Activated T-helper 2 cell treated with anti-CD3 and anti-CD28 coated beads, Interferon-gamma antibody, Interleukin-2, Interleukin-4, amounts not matched to agents 10 μg/mL and 5 μg/mL and 100 μg/mL, durations not matched to agents 14 hours and 24 hours and 36 hours (primary cell): ENCODE measurements at regions of chr1 and their contacts with region 1.

Region 1: GRCh38 chr1:89908672-89909436 is 86.1 kb upstream of the ZNF326 start:
- DNase-seq: no peak
- H3K4me3 Mint-ChIP-seq: no peak overlapping the region
- H3K27ac Mint-ChIP-seq: peak overlapping the region; percentile 34
- H3K4me1 Mint-ChIP-seq: peaks cover 49% of the 10 kb centered on the region
- H3K27me3 Mint-ChIP-seq: no peaks in the 10 kb centered on the region

Region 2: DNA sequence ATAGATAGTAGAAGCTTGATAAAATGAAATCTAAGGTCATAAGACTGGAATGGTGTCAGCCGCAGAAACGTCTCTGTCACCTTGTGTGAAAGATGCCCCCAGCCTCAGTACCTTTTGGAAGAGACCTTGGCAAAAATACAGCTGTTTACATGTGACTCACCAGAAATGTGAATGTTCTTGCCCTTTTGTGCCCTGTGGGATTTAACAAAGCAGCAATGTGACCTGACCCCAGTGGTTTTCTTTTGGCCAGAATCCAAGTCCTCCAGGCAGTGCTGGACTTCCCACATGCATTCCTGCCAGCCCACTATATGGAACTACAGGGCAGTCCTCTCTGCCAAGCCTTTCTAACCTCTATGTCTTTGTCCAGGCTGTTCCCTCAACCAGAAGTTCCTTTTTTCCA is 303.2 kb before region 1 on chr1:
- intact Hi-C with region 1: no loop called
- DNase-seq: no peak
- H3K4me3 Mint-ChIP-seq: peak overlapping the region; percentile 5
- H3K27ac Mint-ChIP-seq: peak overlapping the region; percentile 99
- H3K4me1 Mint-ChIP-seq: peaks cover 90% of the 10 kb centered on the region
- H3K27me3 Mint-ChIP-seq: no peaks in the 10 kb centered on the region

Region 3: DNA sequence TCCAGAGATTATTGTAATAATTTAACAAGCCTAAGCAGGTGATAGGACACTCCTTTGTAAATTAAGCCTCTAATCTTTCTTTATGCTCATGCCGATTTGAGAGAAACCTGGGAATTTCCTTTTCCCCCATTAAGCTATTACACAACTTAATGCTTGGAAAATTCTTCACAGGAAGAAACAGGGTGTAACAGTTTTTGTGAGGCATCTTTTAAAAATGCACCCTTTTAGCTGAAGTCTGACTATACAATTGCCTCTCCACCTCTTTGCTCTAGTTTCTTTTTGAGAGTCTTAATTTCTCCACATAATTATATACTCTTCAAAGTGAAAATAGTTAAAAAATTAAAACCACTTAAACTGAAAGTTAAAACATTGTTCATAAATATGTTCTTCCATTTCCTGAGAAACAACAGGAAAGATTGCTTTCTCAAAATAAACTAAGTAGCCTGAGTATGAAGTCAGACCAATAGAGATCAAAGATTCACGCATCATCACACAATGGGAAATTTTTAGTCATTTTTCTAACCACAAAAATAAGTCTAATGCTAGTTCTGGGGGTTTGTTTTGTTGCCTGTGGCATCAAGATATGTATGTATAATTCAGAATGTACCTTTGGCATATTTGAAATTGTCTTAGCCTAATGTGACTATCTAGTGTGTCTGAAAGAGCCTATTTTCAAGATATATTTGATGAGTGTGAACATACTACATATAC is 53.3 kb before region 1 on chr1:
- intact Hi-C with region 1: loop called (anchors 2 kb)
- DNase-seq: no peak
- H3K4me3 Mint-ChIP-seq: peak overlapping the region; percentile 68
- H3K27ac Mint-ChIP-seq: no peak overlapping the region
- H3K4me1 Mint-ChIP-seq: peaks cover 10% of the 10 kb centered on the region
- H3K27me3 Mint-ChIP-seq: no peaks in the 10 kb centered on the region

Region 4: DNA sequence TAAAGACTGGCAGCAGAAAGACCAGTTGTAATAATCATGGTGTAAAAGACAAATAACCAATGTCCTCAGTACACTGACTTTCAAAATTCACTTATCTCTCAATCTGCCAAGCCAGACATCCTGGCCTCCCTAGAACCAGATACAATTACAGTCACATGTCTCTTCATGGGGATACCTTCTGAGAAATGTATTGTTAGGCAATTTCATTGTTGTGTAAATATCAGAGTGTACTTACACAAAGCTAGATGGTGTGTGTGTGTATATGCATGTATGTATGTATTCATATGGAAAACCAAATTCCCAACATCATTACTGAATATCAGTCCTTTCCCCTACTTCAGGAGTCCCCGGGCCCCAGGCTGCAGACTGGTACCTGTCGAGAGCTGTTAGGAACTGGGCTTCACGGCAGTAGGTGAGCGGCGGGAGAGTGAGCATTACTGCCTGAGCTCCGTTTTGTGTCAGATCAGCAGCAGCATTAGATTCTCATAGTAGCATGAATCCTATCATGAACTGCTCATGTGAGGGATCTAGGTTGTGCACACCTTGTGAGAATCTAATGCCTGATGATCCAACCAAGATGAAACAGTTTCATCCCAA is 20.7 kb after region 1 on chr1:
- intact Hi-C with region 1: no loop called
- DNase-seq: no peak
- H3K4me3 Mint-ChIP-seq: no peak overlapping the region
- H3K27ac Mint-ChIP-seq: no peak overlapping the region
- H3K4me1 Mint-ChIP-seq: peaks cover 4% of the 10 kb centered on the region
- H3K27me3 Mint-ChIP-seq: no peaks in the 10 kb centered on the region

Region 5: DNA sequence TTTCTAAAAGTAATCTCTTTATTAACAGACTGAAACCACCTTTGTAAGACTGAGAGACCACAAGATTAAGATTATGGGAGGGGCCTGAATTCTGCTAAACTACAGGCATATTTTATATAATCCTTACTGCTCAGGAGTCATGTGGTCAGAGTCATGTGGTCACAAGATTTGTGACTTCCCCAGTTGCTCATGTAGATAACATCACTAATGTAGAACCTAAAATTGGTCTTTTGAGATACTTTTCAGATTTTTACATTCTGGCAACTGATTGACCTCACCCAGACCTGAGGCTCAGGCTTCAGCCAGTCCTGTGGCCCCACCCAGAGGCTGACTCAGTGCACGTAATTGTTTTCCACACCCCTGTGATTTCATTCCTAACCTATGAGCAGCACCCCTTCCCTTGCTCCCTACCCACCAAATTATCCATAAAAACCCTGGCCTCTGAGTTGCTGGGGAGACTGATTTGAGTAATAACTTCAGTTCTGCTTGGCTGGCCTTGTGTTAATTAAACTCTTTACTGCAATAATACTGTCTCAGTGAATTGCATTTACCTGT is 44.3 kb after region 1 on chr1:
- intact Hi-C with region 1: loop called (anchors 5 kb)
- DNase-seq: peak; percentile 16
- H3K4me3 Mint-ChIP-seq: no peak overlapping the region
- H3K27ac Mint-ChIP-seq: peak overlapping the region; percentile 26
- H3K4me1 Mint-ChIP-seq: peaks cover 29% of the 10 kb centered on the region
- H3K27me3 Mint-ChIP-seq: no peaks in the 10 kb centered on the region

Region 6: GRCh38 chr1:89965193-89965768 is 56.4 kb after region 1 on chr1:
- intact Hi-C with region 1: no loop called
- DNase-seq: no peak
- H3K4me3 Mint-ChIP-seq: no peak overlapping the region
- H3K27ac Mint-ChIP-seq: no peak overlapping the region
- H3K4me1 Mint-ChIP-seq: peaks cover 10% of the 10 kb centered on the region
- H3K27me3 Mint-ChIP-seq: peaks cover 23% of the 10 kb centered on the region

Region 7: GRCh38 chr1:90579212-90579802 is 670.5 kb after region 1 on chr1:
- intact Hi-C with region 1: no loop called
- DNase-seq: no peak
- H3K4me3 Mint-ChIP-seq: no peak overlapping the region
- H3K27ac Mint-ChIP-seq: no peak overlapping the region
- H3K4me1 Mint-ChIP-seq: no peaks in the 10 kb centered on the region
- H3K27me3 Mint-ChIP-seq: peaks cover 2% of the 10 kb centered on the region